Calu3 (cell line): ENCODE measurements at regions of chrX and their contacts with region 1.

Region 1: GRCh38 chrX:30627818-30628652 is 25.2 kb upstream of the GK start:
- DNase-seq: peak; percentile 11
- H3K4me3 Mint-ChIP-seq: no peak overlapping the region
- H3K27ac Mint-ChIP-seq: peak overlapping the region; percentile 85
- H3K4me1 Mint-ChIP-seq: peaks cover 21% of the 10 kb centered on the region
- H3K27me3 Mint-ChIP-seq: no peaks in the 10 kb centered on the region
- CTCF ChIP-seq: no peak

Region 2: DNA sequence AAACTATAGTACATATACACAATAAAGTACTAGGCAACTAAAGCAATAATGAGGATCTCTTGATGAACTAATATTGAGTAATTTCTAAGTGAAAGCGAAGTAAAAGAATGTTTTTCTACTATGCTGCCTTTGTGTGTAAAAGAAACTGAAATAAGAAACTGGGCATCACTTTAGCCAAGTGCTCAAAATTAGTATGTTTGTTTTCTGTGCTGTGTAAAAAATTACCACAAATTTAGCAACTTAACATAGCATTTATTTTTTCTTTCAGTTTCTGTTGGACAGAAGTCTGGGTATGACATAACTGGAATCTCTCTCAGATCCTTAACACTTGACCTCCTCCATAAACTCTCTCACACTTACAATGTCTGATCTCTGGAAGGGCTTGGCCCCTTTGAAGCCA is 1099.8 kb before region 1 on chrX:
- CTCF ChIA-PET with region 1: no interaction called
- intact Hi-C with region 1: no loop called
- DNase-seq: no peak
- H3K4me3 Mint-ChIP-seq: no peak overlapping the region
- H3K27ac Mint-ChIP-seq: no peak overlapping the region
- H3K4me1 Mint-ChIP-seq: peaks cover 6% of the 10 kb centered on the region
- H3K27me3 Mint-ChIP-seq: no peaks in the 10 kb centered on the region
- CTCF ChIP-seq: no peak

Region 3: GRCh38 chrX:30653415-30654131 is 25.5 kb after region 1 on chrX and contains the start of gene GK:
- CTCF ChIA-PET with region 1: no interaction called
- intact Hi-C with region 1: loop called (anchors 1 kb)
- DNase-seq: peak; percentile 36
- H3K4me3 Mint-ChIP-seq: peak within 1 kb of the TSS; percentile 92
- H3K27ac Mint-ChIP-seq: peak within 1 kb of the TSS; percentile 45
- H3K4me1 Mint-ChIP-seq: peaks cover 37% of the 10 kb centered on the region
- H3K27me3 Mint-ChIP-seq: no peaks in the 10 kb centered on the region
- CTCF ChIP-seq: no peak
- total RNA-seq, gene GK: 14.3 and 15.2 TPM in 2 replicates